ENCODE measurements at regions of chr10 and their contacts with region 1.

Region 1: DNA sequence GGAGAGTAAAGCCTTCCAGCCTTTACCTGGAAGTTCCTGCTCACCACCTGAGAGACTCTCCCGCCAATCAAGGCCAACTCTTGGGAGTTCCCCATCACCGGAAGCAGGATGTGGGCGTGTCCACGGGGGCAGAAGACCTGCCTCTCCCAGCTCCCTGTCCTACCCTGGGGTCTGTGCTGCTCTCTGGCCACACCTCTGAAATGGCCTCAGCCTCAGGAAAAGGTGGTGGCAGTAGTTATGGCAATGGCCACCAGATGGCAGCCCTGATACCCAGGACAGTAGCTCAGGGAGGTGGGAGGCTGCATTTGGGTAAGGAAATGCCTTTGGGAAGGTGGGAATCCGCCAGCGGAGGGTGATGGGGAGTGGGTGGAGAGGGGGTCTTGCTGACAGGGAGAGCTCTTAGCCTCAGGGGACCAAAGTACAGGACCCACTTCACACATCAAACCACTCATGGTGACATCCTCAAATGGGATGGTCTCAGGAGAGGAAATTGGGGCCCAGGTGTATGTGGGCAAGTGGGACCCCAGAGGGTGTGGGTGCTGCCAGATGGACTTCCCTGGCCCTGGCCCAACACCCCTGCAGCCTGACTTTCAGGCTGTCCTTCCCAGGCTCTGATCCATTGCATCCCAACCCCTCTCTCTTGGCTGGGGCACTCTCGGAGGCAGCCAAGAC is 33.9 kb downstream of the KAZALD1 start:
- DNase-seq: no peak
- H3K4me3 ChIP-seq: no peak overlapping the region
- CTCF ChIP-seq: peak; percentile 92

Region 2: GRCh38 chr10:101060036-101060950 is 35.4 kb before region 1 on chr10:
- CTCF ChIA-PET with region 1: interaction called, 55 read pairs
- POLR2A ChIA-PET with region 1: no interaction called
- DNase-seq: peak; percentile 50
- H3K4me3 ChIP-seq: peak overlapping the region; percentile 96
- CTCF ChIP-seq: peak; percentile 88

Region 3: DNA sequence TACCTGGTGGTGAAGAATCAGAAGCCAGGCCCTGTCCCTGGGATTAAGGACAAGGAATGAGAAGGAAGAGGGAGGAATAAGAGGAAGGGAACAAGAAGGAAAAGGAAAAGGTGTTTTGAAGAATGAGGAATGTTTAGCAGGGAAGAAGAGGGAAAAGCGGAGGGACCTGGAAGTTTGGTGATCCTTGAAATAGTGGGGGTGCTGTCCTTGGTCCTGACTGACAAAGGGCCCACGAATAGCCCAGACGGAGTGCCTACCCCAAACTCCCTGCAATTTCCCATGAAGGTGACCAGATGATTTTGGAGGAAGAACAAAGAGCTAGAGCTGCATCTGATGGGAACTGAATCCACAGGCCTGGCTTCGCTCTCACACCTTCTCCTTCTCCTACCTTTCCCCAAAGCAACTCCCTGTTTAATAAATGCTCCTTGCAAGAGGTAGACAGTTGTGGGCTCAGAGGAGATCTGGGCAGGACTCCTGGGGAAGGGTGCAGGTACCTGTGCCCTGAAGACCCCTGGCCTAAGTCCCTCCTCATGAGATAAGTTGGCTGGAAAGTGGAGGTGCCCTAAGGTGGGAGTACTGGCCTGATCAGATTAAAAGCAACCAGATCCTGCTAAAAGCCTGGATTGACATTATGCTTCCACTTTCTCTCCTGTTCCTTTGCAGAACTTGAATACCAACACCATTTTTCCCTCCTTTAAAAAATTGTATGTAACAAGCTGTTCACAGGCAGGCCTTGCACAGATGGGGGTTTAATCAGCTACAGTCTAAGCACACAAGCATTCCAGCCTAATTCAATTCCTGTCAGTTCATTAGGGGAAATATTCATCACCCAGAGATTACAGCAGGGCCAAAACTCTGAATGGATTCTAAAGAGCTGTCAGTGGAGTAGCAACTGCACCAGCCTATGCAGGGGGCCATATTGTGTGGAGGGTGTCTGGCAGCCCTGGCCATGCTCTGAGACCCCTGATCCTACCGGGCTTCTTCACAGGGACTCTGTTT is 14.4 kb before region 1 on chr10:
- CTCF ChIA-PET with region 1: interaction called, 99 read pairs
- POLR2A ChIA-PET with region 1: no interaction called
- DNase-seq: no peak
- H3K4me3 ChIP-seq: no peak overlapping the region
- CTCF ChIP-seq: no peak

Region 4: GRCh38 chr10:101120884-101121653 is 25.4 kb after region 1 on chr10:
- CTCF ChIA-PET with region 1: interaction called, 31 read pairs
- POLR2A ChIA-PET with region 1: no interaction called
- DNase-seq: no peak
- H3K4me3 ChIP-seq: peak overlapping the region; percentile 50
- CTCF ChIP-seq: no peak

Region 5: DNA sequence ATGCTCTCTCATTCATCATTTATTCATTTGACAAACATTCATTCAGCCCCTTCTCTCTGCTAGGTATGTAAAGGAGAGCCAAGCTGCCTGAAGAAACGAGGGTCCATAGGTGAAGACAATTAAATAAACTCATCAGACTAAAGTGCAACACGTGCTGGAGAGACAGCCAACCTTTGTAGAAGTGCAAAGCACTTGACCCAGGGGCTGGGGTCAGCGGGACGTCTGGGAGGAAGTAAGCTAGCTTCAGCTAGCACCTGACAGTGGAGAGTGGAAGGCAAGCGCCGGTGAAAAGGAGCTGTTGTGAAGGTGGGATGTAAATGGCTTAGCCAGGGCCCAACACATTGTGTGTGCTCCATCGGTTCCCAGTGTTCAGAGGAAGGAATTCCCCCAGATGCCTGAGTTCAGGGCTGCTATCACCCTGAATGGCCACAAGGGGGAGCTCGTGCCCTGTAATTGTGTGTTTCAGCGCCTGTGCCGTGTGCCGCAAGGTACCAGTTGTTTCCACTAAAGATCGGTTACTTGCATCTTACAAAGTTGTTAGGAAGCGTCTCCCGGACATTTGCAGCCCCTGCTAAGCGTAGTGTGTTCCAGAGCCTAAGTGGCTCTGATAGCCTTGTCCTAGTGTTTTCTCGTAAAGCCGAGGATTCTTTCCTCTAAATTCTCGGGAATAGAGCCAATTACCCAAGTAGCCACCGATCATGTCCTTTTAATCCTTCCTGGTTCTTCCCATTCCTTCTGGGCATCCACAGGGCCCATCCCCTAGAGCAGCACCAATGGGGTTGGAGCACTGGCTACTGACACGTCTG is 66.0 kb after region 1 on chr10:
- CTCF ChIA-PET with region 1: interaction called, 57 read pairs
- POLR2A ChIA-PET with region 1: no interaction called
- DNase-seq: no peak
- H3K4me3 ChIP-seq: peak overlapping the region; percentile 51
- CTCF ChIP-seq: peak; percentile 94

Measured in AG04449 (cell line).